Naive thymus-derived CD8-positive, alpha-beta T cell (primary cell): ENCODE measurements at regions of chr12 and their contacts with region 1.

Region 1: GRCh38 chr12:112108201-112109079 is at the start of gene NAA25:
- DNase-seq: peak; percentile 75 to 94 (median 86)
- ATAC-seq: peak; percentile 87 to 89
- H3K4me3 Mint-ChIP-seq: peak within 1 kb of the TSS; percentile 93 to 98 (median 97)
- H3K27ac Mint-ChIP-seq: peak within 1 kb of the TSS; percentile 93 to 99 (median 98)
- H3K4me1 Mint-ChIP-seq: peaks cover 29 to 49% (median 44%) of the 10 kb centered on the region in 4 donors
- H3K27me3 Mint-ChIP-seq: no peaks in the 10 kb centered on the region
- polyA plus RNA-seq, gene NAA25: 8.7 to 17.3 (median 8.9) TPM

Region 2: DNA sequence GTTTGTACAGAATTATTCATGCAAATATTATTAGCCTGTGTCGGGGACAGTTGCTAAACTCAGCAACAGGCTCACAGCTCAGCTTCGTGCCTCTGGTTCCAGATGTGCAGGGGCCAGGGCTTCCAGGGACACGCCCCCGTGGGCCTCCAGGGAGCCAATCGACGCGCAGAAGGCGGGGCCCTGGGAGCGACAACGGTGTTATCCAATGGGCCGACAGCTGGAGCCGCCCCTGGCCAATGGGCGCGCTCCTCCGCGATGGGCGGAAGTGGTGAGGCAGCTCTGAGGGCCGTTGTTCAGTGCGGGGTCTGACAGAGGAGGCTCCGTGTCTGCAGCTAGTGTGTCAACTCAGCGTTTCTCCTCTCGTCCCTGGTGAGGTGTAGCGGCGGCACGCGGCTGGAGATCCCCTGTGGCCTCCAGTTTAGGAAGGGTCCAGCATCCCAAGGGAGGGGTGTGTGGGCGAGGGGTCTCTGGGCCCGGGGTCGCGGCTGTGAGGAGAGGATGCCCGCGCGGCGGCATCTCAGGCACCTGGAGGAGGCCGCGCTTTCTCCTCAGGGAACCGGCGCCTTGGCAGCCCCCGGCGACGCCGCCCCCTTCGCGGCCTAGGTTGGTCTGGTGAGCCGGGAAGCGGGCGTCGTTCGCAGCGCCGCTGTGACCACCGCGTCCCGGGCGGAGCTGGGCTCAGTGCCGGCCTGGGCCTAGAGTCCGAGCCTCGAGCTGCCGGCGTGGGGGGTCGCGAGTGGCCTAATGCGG is 17.0 kb after region 1 on chr12 and contains the start of gene TRAFD1:
- POLR2A ChIA-PET with region 1: interaction called, 81 read pairs
- DNase-seq: peak; percentile 96 to 99 (median 98)
- ATAC-seq: peak; percentile 99
- H3K4me3 Mint-ChIP-seq: peak within 1 kb of the TSS; percentile 70 to 93 (median 86)
- H3K27ac Mint-ChIP-seq: peak within 1 kb of the TSS; percentile 82 to 92 (median 88)
- H3K4me1 Mint-ChIP-seq: peaks cover 9 to 45% (median 35%) of the 10 kb centered on the region in 4 donors
- H3K27me3 Mint-ChIP-seq: no peaks in the 10 kb centered on the region
- polyA plus RNA-seq, gene TRAFD1: 32.5 to 57.6 (median 55.9) TPM

Region 3: DNA sequence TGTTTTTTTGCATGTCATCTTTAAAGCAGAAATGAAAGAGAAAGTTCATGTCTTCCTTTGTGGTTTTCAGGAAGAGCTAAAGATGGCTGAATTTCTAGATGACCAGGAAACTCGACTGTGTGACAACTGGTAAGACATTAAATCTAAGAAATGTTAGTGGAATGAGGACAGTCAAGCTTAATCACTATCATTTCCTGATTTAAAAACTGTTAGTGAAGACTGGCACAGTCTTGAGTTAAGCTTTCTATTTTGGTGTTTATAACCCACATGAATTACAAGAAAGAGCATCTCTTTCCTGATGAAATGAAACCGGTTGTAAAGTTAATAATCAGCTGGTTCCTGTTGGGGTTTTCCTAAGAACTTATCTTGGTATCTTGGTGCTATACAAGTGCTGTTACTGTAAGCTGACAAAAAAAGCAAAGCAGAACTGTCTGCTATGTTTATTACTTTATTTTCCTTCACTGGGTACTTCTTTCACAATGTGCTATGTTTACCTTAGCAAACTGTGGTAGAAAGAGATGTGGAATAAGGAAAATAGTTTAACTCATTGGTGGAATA is 22.1 kb after region 1 on chr12:
- POLR2A ChIA-PET with region 1: interaction called, 81 read pairs
- DNase-seq: peak in 3 of 10 donors; percentile 49 to 68 (median 66)
- ATAC-seq: peak; percentile 56 to 75
- H3K4me3 Mint-ChIP-seq: peak overlapping the region; percentile 35 to 76 (median 60)
- H3K27ac Mint-ChIP-seq: peak overlapping the region; percentile 48 to 93 (median 86)
- H3K4me1 Mint-ChIP-seq: peaks cover 14 to 67% (median 59%) of the 10 kb centered on the region in 4 donors
- H3K27me3 Mint-ChIP-seq: no peaks in the 10 kb centered on the region

Region 4: DNA sequence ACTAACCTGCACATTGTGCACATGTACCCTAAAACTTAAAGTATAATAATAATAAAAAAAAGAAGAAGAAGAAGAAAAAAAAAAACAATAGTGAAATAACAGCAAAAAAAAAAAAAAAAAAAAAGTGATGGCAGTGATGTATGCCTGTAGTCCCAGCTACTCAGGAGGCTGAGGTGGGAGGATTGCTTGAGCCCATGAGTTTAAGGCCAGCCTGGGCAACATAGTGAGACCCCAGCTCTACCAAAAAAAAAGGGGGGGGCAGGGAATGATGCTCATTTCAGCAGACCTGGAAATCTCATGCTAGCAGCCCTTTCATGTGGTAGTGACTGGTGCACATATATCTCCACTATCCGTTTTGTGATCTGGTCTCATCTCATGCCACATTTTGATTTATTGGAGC is 37.7 kb after region 1 on chr12:
- POLR2A ChIA-PET with region 1: no interaction called
- DNase-seq: no peak
- ATAC-seq: no peak
- H3K4me3 Mint-ChIP-seq: no peak overlapping the region
- H3K27ac Mint-ChIP-seq: peak overlapping the region in 7 of 10 donors; percentile 11 to 74 (median 58)
- H3K4me1 Mint-ChIP-seq: peaks cover 3 to 13% (median 7%) of the 10 kb centered on the region in 4 donors
- H3K27me3 Mint-ChIP-seq: no peaks in the 10 kb centered on the region

Region 5: GRCh38 chr12:112160611-112161010 is 52.2 kb after region 1 on chr12:
- POLR2A ChIA-PET with region 1: interaction called, 12 read pairs
- DNase-seq: no peak
- ATAC-seq: no peak
- H3K4me3 Mint-ChIP-seq: peak overlapping the region in 1 of 10 donors; percentile 29
- H3K27ac Mint-ChIP-seq: peak overlapping the region in 8 of 10 donors; percentile 8 to 83 (median 58)
- H3K4me1 Mint-ChIP-seq: peaks cover 14 to 34% (median 30%) of the 10 kb centered on the region in 4 donors
- H3K27me3 Mint-ChIP-seq: no peaks in the 10 kb centered on the region